OCI-LY7 (cell line): ENCODE measurements at regions of chr10 and their contacts with region 1.

Region 1: GRCh38 chr10:114095559-114096337 is 52.1 kb downstream of the ADRB1 start:
- DNase-seq: peak; percentile 80
- H3K4me3 ChIP-seq: peak overlapping the region; percentile 52
- H3K27ac ChIP-seq: peak overlapping the region; percentile 48
- H3K4me1 ChIP-seq: peaks cover 52% of the 10 kb centered on the region
- CTCF ChIP-seq: no peak

Region 2: GRCh38 chr10:113872139-113873030 is 223.4 kb before region 1 on chr10:
- CTCF ChIA-PET with region 1: no interaction called
- POLR2A ChIA-PET with region 1: interaction called, 3 read pairs
- intact Hi-C with region 1: loop called (anchors 5 kb)
- DNase-seq: no peak
- H3K4me3 ChIP-seq: no peak overlapping the region
- H3K27ac ChIP-seq: no peak overlapping the region
- H3K4me1 ChIP-seq: peaks cover 4% of the 10 kb centered on the region
- CTCF ChIP-seq: peak; percentile 71

Region 3: DNA sequence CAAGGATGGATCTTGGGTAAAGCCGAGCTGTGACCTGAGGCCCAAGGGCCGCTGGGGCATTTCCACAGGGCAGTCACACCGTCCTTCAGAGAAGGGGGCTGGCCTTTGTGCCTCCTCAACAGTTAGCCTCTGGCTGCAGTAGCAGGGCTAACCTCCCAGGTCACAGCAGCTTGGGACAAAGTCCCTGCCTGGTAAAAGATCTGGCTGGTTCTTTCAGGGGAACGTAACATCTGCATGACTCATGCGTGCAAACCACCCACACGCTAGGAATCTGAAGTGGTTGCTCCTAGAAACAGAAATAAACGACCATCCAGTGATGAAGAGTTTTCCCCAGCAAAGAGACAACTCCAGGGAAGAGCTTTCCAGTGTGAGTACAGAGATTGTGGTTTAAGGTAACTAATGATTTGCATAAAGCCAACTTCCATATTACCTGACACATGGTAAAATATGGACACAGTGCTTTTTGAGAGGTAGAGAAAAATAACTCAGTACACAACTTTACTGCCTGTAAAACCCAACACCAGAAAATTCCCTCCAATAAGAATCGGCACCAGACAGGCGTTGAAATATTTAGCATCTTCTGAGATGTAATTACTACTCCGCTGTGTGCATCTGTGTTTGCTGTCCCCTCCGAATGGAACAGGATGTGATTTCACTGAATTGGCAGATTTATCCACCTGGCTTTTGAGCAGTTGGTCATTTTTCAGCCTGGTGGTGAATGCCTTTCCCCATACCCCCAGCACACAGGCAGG is 136.9 kb before region 1 on chr10:
- CTCF ChIA-PET with region 1: no interaction called
- POLR2A ChIA-PET with region 1: no interaction called
- intact Hi-C with region 1: loop called (anchors 2 kb)
- DNase-seq: no peak
- H3K4me3 ChIP-seq: no peak overlapping the region
- H3K27ac ChIP-seq: peak overlapping the region; percentile 88
- H3K4me1 ChIP-seq: peaks cover 51% of the 10 kb centered on the region
- CTCF ChIP-seq: no peak

Region 4: DNA sequence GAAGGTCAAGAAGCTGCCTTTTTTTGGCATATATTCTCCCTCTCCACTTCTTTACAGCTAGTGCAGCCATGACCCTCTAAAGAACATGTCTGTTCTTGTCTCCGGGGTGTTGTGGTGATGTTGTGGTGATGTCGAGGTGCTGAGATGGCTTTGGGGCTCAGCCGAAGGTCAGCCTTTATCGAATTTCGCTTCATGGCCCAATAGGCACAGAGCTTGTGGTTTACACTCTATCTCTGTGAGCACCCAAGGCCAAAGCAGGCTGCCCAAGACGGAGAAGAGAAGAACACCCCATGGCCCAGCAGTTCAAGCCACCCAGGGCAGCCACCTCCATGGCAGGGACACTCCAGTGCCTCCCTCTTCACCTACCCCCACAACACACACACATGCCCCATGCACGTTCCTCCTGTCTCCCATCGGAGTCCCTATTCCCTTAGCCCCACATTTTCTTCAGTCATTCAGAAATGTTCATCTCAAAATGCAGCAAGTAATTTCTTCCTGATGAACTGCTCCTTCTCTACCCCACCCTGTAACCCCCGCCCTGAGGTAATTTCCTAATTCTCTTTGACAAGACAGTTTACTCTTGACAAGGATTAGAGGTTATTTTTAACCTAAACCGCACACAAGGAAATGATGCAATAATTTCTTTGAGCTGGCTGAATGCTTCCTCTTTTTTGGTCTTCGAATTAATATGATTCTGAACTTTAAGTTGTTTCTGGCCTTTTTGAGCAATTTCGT is 70.7 kb before region 1 on chr10:
- CTCF ChIA-PET with region 1: no interaction called
- POLR2A ChIA-PET with region 1: no interaction called
- intact Hi-C with region 1: loop called (anchors 5 kb)
- DNase-seq: peak; percentile 91
- H3K4me3 ChIP-seq: peak overlapping the region; percentile 56
- H3K27ac ChIP-seq: peak overlapping the region; percentile 67
- H3K4me1 ChIP-seq: peaks cover 36% of the 10 kb centered on the region
- CTCF ChIP-seq: no peak

Region 5: DNA sequence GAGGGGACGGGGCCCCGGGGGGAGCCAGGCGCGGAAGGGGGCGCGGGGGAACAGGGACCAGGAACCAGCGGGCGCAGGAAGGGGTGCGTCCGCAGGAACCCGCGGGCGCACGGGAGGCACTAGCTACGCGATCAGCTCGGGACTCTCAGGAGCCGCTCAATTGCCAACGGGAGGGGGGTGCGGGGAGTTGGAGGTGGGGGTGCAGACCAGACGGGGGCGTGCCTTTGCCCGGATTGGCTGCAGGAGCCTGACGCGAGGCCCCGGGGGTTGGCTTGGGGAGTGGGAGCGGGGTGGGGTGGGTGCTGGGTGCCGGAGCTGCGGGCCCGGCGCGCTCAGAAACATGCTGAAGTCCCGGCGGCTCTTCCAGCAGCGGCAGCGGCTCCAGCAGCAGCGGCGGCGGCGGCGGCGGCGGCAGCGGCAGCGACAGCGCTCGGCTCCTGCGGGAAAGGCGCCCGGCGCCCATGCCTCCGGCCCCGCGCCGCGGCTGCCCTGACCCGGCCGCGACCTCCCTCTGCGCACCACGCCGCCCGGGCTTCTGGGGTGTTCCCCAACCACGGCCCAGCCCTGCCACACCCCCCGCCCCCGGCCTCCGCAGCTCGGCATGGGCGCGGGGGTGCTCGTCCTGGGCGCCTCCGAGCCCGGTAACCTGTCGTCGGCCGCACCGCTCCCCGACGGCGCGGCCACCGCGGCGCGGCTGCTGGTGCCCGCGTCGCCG is 52.1 kb before region 1 on chr10 and contains the start of gene ADRB1:
- CTCF ChIA-PET with region 1: no interaction called
- POLR2A ChIA-PET with region 1: interaction called, 8 read pairs
- intact Hi-C with region 1: loop called (anchors 1 kb)
- DNase-seq: peak; percentile 78
- H3K4me3 ChIP-seq: peak within 1 kb of the TSS; percentile 72
- H3K27ac ChIP-seq: no peak within 1 kb of the TSS
- H3K4me1 ChIP-seq: peaks cover 8% of the 10 kb centered on the region
- CTCF ChIP-seq: no peak
- total RNA-seq, gene ADRB1: 1.1 and 2.0 TPM in 2 replicates